CD8-positive, alpha-beta memory T cell (primary cell): ENCODE measurements at regions of chr2 and their contacts with region 1.

Region 1: DNA sequence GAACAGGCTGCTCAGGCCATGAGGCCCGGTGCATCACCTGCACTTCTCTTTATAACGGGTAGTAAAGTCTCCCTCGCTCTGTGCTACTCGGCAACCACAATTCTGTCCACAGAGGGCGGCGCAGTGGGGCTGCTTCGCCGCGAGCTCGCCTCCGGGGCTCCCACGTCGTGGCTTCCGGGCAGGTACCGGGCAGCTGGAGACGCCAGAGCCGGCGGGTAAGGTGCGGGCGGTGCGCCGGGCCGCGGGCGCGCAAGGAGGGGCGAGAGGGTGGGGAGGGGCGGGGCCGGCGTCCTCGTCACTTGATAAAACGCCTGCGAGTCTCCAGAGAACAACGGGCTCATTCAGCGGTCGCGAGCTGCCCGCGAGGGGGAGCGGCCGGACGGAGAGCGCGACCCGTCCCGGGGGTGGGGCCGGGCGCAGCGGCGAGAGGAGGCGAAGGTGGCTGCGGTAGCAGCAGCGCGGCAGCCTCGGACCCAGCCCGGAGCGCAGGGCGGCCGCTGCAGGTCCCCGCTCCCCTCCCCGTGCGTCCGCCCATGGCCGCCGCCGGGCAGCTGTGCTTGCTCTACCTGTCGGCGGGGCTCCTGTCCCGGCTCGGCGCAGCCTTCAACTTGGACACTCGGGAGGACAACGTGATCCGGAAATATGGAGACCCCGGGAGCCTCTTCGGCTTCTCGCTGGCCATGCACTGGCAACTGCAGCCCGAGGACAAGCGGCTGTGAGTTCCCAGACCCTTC is at the start of gene ITGA6:
- DNase-seq: peak; percentile 61 to 84 (median 75)
- H3K4me3 ChIP-seq: peak within 1 kb of the TSS; percentile 70
- H3K4me3 Mint-ChIP-seq: peak within 1 kb of the TSS; percentile 88 to 96 (median 92)
- H3K27ac ChIP-seq: peak within 1 kb of the TSS; percentile 48
- H3K27ac Mint-ChIP-seq: peak within 1 kb of the TSS; percentile 79 to 93 (median 90)
- H3K4me1 ChIP-seq: peaks cover 60% of the 10 kb centered on the region
- H3K4me1 Mint-ChIP-seq: peaks cover 14 to 52% (median 19%) of the 10 kb centered on the region in 3 donors
- H3K27me3 ChIP-seq: no peaks in the 10 kb centered on the region
- H3K27me3 Mint-ChIP-seq: peaks cover 3 to 13% of the 10 kb centered on the region in 2 donors
- total RNA-seq, gene ITGA6: 8.0 to 9.0 TPM

Region 2: GRCh38 chr2:172442072-172442895 is 14.9 kb after region 1 on chr2:
- CTCF ChIA-PET with region 1: interaction called, 51 read pairs
- POLR2A ChIA-PET with region 1: interaction called, 21 read pairs
- DNase-seq: peak in 2 of 5 donors; percentile 60 to 61
- H3K4me3 ChIP-seq: peak overlapping the region; percentile 29
- H3K4me3 Mint-ChIP-seq: peak overlapping the region; percentile 69 to 88 (median 78)
- H3K27ac ChIP-seq: no peak overlapping the region
- H3K27ac Mint-ChIP-seq: peak overlapping the region; percentile 38 to 75 (median 68)
- H3K4me1 ChIP-seq: peaks cover 73% of the 10 kb centered on the region
- H3K4me1 Mint-ChIP-seq: peaks cover 15 to 57% (median 45%) of the 10 kb centered on the region in 3 donors
- H3K27me3 ChIP-seq: no peaks in the 10 kb centered on the region
- H3K27me3 Mint-ChIP-seq: no peaks in the 10 kb centered on the region